Left cardiac atrium (tissue), 4 donors: ENCODE measurements at regions of chr10 and their contacts with region 1.

Region 1: DNA sequence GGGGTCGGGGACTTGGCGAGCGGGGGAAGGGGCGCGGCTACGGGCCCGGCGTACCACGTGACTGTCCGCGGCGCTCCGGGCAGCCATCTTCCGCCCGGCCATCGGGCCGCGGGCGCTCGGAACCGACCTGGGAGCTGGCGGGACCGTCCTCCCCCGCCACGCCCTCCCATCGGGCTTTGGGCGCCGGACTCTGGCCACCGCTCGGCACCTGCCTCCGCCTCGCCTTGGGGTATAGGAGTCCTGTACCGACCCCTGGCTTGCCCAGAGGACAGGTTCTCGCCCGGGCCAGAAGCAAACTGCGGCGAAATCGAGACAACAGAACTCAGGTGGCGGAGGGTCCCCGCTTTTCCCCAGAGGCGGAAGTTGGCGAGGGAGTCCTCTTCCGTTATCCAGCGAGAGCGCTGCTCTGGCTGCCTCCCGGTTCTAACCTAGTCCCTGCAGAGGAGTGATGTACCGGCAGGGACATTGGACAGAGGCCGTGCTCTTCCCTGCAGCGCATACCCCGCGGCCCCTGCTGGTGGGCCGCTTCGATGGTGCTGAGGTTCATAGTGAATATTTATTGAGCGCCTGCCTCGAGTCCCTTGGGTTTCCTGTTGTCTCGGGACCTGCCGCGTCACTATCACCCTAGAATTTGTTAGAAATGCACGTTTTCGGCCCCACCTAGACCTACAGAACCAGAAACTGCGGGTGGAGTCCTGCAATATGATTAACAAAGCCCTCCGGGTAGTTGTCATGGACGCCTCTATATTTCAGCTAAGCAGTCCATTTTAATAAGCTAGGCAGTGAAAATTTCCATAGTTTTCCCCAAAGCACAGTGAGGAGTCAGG is 1.3 kb upstream of the SGMS1 start:
- DNase-seq: peak; percentile 71
- ATAC-seq: peak; percentile 72 to 74

Region 2: GRCh38 chr10:50417886-50418830 is 206.9 kb before region 1 on chr10:
- intact Hi-C with region 1: loop called (anchors 2 to 5 kb)
- DNase-seq: peak; percentile 84
- ATAC-seq: peak; percentile 86 to 98

Region 3: GRCh38 chr10:50552771-50553535 is 72.1 kb before region 1 on chr10:
- intact Hi-C with region 1: loop called (anchors 5 to 10 kb)
- DNase-seq: no peak
- ATAC-seq: no peak

Region 4: GRCh38 chr10:50577681-50578350 is 47.3 kb before region 1 on chr10:
- intact Hi-C with region 1: loop called in 1 of 2 experiments (anchors 5 kb)
- DNase-seq: peak; percentile 50
- ATAC-seq: peak; percentile 82 to 92

Region 5: GRCh38 chr10:51074238-51075028 is 449.4 kb after region 1 on chr10 and contains the start of gene PRKG1:
- intact Hi-C with region 1: no loop called
- DNase-seq: peak; percentile 86
- ATAC-seq: peak; percentile 92 to 98
- total RNA-seq, gene PRKG1: 31.5 to 34.7 TPM